Activated T-helper 1 cell treated with anti-CD3 and anti-CD28 coated beads, Interleukin-12 subunit alpha, Interleukin-12 subunit beta, Interleukin-2, Interleukin-4 antibody, amounts not matched to agents 30 ng/mL and 10 ng/mL and 1 ng/mL, durations not matched to agents 14 hours and 24 hours and 36 hours (primary cell): ENCODE measurements at regions of chr13 and their contacts with region 1.

Region 1: DNA sequence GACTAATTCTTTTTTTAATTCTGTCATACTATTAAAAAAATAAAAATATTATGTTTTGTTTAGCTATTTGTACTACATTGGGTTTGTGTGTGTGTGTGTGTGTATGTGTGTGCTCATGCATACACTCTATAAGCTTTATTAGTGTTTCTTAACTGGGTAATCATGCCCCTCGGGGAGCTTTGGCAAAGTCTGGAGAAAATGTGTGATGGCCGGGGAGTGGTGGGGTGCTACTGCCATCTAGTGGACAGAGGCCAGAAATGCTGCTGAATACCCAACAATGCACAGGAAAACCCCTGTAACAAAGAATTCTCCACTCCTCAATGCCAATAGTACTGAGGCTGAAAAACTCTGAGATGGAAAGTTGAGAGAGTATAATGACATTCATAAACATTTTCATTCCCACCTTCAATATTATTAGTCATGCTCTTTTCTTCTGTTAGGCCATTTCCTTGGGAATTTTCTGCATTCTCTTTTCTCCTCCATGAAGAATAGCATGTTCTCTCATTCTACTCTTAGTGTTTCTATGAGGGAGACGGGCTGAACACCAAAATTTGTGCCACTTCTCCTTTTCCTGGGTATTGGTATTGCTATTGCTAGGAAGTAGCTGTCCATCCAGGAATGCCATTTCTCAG is 157.3 kb downstream of the DNAJC3 start:
- DNase-seq: peak; percentile 38
- H3K4me3 Mint-ChIP-seq: no peak overlapping the region
- H3K27ac Mint-ChIP-seq: no peak overlapping the region
- H3K4me1 Mint-ChIP-seq: no peaks in the 10 kb centered on the region
- H3K27me3 Mint-ChIP-seq: peaks cover 15% of the 10 kb centered on the region

Region 2: GRCh38 chr13:95191821-95192563 is 642.3 kb before region 1 on chr13:
- intact Hi-C with region 1: loop called (anchors 5 kb)
- DNase-seq: peak; percentile 24
- H3K4me3 Mint-ChIP-seq: no peak overlapping the region
- H3K27ac Mint-ChIP-seq: no peak overlapping the region
- H3K4me1 Mint-ChIP-seq: peaks cover 11% of the 10 kb centered on the region
- H3K27me3 Mint-ChIP-seq: no peaks in the 10 kb centered on the region

Region 3: GRCh38 chr13:95494082-95494681 is 340.1 kb before region 1 on chr13:
- intact Hi-C with region 1: loop called (anchors 1 kb)
- DNase-seq: no peak
- H3K4me3 Mint-ChIP-seq: no peak overlapping the region
- H3K27ac Mint-ChIP-seq: no peak overlapping the region
- H3K4me1 Mint-ChIP-seq: peaks cover 3% of the 10 kb centered on the region
- H3K27me3 Mint-ChIP-seq: peaks cover 13% of the 10 kb centered on the region

Region 4: DNA sequence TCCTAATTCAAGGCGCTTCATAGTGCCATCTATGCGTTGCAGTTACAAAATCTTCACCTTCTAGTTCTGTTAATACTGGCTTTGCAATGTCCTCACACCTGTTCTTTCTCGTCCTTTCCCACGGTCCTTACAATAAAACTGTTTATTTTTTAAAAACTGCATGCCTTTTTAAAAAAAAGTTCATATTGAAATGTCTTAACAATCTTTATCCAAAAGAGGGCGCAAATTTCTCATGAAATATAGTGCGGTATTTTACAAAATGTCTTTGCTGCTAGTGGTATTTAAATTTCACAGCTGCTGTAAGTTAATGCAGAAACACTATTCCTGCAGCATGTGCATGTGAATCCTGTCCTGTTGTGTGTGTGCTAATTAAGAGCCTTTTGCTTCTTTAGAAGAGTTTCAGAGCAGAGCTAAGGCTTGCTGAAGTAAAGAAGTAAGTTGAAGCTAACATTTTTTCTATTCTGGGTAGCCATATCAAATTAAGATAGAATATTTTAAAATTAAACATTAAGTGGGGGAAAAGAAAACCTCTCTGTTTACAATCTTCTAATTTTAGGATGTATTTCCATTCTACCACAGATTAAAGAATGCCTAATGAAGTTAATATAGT is 297.5 kb before region 1 on chr13:
- intact Hi-C with region 1: loop called (anchors 1 kb)
- DNase-seq: no peak
- H3K4me3 Mint-ChIP-seq: no peak overlapping the region
- H3K27ac Mint-ChIP-seq: no peak overlapping the region
- H3K4me1 Mint-ChIP-seq: peaks cover 8% of the 10 kb centered on the region
- H3K27me3 Mint-ChIP-seq: peaks cover 10% of the 10 kb centered on the region

Region 5: DNA sequence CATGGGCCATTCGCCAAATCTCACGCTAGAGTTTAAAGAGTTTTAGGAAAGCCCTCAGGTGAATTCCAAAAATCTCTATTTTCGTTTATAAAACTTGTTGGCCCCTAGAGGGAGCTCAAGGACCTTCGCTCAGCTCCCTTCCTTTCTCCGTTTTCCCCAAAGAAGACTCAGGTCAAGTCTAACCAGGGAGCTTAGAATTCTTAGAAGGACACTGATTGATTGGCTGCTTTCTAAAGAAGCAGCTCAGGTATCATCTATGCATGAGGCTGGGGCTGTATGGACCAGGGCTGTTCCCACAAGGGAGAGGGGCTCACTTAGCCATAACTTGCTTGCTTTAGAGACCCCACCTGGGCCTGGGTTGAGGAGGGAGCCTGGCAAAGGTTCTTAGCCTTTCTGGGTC is 210.2 kb before region 1 on chr13:
- intact Hi-C with region 1: loop called (anchors 1 kb)
- DNase-seq: no peak
- H3K4me3 Mint-ChIP-seq: no peak overlapping the region
- H3K27ac Mint-ChIP-seq: no peak overlapping the region
- H3K4me1 Mint-ChIP-seq: no peaks in the 10 kb centered on the region
- H3K27me3 Mint-ChIP-seq: peaks cover 6% of the 10 kb centered on the region

Region 6: GRCh38 chr13:95660981-95661581 is 173.2 kb before region 1 on chr13:
- intact Hi-C with region 1: loop called (anchors 1 kb)
- DNase-seq: no peak
- H3K4me3 Mint-ChIP-seq: no peak overlapping the region
- H3K27ac Mint-ChIP-seq: no peak overlapping the region
- H3K4me1 Mint-ChIP-seq: no peaks in the 10 kb centered on the region
- H3K27me3 Mint-ChIP-seq: peaks cover 21% of the 10 kb centered on the region